Transverse colon (tissue), 4 donors: ENCODE measurements at regions of chr5 and their contacts with region 1.

Region 1: DNA sequence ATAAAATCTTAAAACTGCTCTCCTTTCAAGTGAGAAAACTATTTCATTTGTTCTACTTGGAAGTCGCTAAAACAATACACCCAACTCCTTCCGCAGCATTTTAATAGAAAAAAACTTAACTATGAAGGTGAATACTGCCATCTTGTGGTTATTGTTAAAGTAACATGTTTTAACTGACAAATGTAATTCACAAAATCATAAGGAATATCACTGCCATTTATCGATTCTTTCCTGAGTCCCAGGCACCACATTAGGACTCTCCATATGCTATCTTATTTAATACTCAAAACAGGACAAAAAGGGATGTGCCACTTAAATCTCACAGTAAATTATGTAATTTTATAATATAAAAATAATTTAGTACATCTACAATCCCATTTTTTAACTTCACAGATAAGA is 130.5 kb upstream of the ITGA1 start:
- DNase-seq: no peak
- H3K4me3 ChIP-seq: no peak overlapping the region
- H3K27ac ChIP-seq: no peak overlapping the region
- H3K4me1 ChIP-seq: no peaks in the 10 kb centered on the region
- H3K27me3 ChIP-seq: peaks cover 10% of the 10 kb centered on the region
- CTCF ChIP-seq: peak; percentile 44 to 72 (median 56)
- EP300 ChIP-seq: no peak
- POLR2A ChIP-seq: no peak

Region 2: DNA sequence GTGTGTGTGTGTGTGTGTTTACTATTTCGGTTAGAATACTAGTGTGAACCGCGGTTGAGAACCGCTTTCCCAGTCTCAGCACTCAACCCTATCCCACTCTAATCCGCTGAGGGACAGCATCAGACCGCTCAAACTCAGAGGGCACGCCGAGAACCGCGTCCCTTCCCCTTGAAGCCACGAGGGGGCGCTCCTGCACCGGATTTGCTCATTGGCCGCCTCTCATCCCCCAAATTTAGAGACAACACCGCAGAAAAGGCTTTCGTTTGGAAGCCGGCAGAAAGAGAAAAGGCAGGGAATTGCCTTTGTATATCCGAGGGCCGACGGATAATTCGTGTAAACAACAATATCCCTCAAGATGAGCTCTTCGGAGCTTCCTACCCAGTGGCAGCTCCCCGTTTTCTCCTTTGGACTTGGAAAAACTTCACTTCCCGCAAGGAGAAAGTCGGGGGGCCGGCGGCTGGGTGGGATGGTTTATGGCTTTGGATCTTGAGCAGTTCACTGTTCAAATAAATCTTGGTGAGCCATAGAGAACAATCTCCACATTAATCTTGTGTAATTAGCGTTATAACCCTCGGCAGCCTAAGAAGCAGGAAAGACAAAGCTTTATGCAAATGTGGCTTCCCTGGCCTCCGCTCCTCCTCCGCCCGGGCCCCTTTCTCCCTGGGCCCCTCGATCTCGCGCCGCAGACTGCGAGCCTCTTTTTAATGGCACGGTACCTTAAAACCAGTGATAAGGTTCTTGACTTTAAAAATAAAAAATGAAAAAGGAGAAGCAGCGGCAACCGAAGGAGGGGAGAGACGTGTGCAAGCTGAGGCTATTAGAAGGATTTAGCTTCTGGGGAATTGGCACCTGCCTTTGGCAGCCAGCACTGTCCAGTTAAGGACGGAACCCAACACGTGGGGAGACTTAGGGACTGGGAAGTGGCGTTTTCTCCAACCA is 1694.0 kb before region 1 on chr5:
- in situ Hi-C with region 1: loop called in 3 of 4 experiments (anchors 25 kb)
- intact Hi-C with region 1: no loop called
- DNase-seq: peak; percentile 63
- H3K4me3 ChIP-seq: peak overlapping the region; percentile 20 to 43 (median 30)
- H3K27ac ChIP-seq: no peak overlapping the region
- H3K4me1 ChIP-seq: peaks cover 7 to 31% (median 25%) of the 10 kb centered on the region in 4 donors
- H3K27me3 ChIP-seq: peaks cover 72% of the 10 kb centered on the region
- CTCF ChIP-seq: peak; percentile 80 to 92 (median 88)
- EP300 ChIP-seq: no peak
- POLR2A ChIP-seq: no peak

Region 3: GRCh38 chr5:50969151-50970031 is 1687.9 kb before region 1 on chr5:
- in situ Hi-C with region 1: loop called (anchors 10 to 25 kb)
- intact Hi-C with region 1: no loop called
- DNase-seq: no peak
- H3K4me3 ChIP-seq: peak overlapping the region in 3 of 4 donors; percentile 16 to 49 (median 16)
- H3K27ac ChIP-seq: peak overlapping the region in 1 of 4 donors; percentile 21
- H3K4me1 ChIP-seq: peaks cover 11 to 31% (median 26%) of the 10 kb centered on the region in 4 donors
- H3K27me3 ChIP-seq: peaks cover 89% of the 10 kb centered on the region
- CTCF ChIP-seq: no peak
- EP300 ChIP-seq: no peak
- POLR2A ChIP-seq: no peak